ENCODE measurements at regions of chr17 and their contacts with region 1.

Region 1: DNA sequence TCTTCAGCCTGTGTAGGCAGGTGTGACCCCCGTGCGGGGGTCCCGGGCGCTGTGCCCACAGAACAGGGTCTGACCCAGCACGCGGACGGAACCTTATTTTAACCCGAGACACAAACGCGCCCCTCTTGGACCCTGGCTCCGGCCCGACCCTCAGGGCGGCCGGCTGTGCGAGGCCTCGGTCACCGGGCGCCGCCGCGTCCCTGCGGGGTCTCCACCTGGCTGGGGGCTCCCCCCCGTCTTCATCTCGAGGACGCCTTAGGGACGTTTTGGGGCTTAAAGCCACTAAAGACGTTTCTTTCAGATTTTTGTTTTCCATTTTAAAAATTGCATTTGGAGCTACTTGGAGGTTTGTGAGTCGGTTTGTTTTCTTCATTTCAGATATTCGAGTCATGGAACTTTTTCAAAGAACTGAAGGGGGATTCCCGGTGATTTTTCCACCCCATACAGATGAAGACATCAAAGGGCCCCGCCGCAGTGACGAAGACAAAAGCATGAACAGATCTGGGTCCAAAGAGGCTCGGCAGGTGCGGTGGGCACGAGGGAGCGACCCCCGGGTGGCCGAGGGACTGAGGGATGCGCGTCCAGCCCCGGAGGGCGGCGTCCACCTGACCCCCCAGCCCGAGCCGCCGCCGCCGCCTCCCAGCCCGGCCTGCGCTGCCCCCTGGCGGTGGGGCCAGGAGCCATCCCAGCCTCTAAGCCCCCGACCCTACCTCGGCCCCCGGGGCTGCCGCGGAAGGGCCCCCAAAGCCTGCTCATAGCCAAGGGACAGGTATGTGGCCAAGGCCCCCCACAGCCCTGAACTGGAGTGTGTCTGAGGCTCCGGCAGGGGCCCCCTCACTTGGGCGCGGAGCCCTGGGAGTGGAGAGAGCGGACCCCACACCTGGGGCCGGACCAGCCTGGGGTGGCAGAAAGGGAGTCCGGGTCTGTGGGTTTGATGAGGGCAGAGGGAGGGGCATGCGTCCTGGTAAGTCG is 3.8 kb upstream of the CD7 start:
- DNase-seq: peak; percentile 40
- H3K4me3 ChIP-seq: peak overlapping the region in 1 of 4 donors; percentile 11
- H3K27ac ChIP-seq: no peak overlapping the region
- H3K4me1 ChIP-seq: peaks cover 0 to 28% (median 11%) of the 10 kb centered on the region in 4 donors
- H3K27me3 ChIP-seq: peaks cover 6% of the 10 kb centered on the region
- CTCF ChIP-seq: peak; percentile 89 to 98 (median 94)
- EP300 ChIP-seq: no peak
- POLR2A ChIP-seq: no peak

Region 2: DNA sequence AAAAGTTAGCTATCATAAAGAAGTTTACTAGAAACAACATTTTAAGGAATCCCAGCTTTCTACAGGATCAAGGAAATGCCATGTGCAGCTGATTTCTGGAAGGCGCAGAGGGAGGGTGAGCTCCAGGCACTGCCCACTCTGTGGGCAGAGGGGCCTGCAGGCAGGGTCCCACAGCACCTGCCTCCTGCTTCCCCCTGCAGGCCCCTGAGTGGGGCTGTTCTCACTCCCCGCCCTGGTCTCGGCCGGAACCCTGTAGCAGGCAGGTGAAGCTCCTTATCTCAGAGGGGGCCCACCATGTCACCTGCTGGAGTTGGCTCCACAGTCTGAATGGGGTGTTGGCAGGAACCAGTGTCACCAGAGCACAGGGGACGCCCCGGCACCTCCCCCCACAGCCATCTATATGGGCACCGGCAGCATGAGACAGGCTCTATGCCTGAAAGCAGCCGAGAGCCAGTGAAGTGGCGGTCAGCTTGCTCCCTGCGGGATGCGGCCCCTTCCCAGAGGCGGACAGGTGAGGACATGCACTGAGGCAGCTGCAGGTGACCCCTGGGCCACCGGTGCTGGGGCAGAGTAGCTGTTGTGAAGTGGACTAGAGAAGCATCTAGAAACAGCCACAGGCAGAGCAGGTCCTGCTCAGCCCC is 175.6 kb before region 1 on chr17:
- in situ Hi-C with region 1: no loop called
- intact Hi-C with region 1: no loop called
- DNase-seq: no peak
- H3K4me3 ChIP-seq: no peak overlapping the region
- H3K27ac ChIP-seq: no peak overlapping the region
- H3K4me1 ChIP-seq: no peaks in the 10 kb centered on the region
- H3K27me3 ChIP-seq: no peaks in the 10 kb centered on the region
- CTCF ChIP-seq: no peak
- EP300 ChIP-seq: no peak
- POLR2A ChIP-seq: no peak

Region 3: DNA sequence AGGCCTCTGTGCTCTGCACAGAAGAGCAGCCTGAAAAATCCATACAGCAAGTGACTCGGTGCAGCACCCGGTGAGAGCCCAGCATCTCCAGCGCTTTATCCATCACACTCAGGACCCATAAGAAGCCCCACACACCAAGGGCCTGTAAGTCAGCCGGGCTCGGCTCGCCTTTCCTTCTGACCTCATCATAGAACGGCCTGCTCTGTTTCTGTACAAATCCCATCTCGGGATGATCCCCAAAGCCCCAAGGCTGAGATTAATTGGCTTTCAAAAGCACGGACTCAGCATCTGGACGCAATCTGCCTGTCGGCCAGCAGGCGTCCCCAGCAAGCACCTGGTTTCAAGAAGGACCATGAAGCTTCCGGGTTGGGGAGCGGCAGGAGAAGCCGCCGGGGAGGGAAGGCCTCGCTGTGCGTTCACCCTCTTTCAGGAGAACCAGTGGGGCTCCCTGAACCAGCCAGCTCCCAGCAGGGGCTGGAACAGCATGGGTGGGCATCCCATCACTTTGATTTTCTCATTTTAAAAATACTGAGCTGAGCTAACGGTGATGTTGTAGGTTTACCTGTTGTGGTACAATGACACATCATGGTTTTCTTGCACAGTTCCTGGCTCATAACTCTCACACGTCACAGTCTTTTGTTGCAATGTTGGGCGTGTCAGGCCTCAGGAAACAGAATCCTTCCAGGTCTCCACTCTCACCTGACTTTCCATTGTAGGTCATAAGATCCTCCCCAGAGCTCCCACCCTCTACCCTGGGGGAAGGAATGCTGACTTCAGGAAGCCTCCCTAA is 115.3 kb before region 1 on chr17:
- in situ Hi-C with region 1: loop called in 1 of 4 experiments (anchors 10 kb)
- intact Hi-C with region 1: loop called (anchors 2 kb)
- DNase-seq: peak; percentile 89
- H3K4me3 ChIP-seq: no peak overlapping the region
- H3K27ac ChIP-seq: peak overlapping the region; percentile 73 to 81 (median 76)
- H3K4me1 ChIP-seq: peaks cover 11 to 15% (median 12%) of the 10 kb centered on the region in 4 donors
- H3K27me3 ChIP-seq: no peaks in the 10 kb centered on the region
- CTCF ChIP-seq: peak; percentile 89 to 97 (median 93)
- EP300 ChIP-seq: no peak
- POLR2A ChIP-seq: peak; percentile 87

Region 4: GRCh38 chr17:82236142-82236981 is 84.9 kb before region 1 on chr17:
- in situ Hi-C with region 1: no loop called
- intact Hi-C with region 1: loop called (anchors 5 kb)
- DNase-seq: peak; percentile 80
- H3K4me3 ChIP-seq: no peak overlapping the region
- H3K27ac ChIP-seq: peak overlapping the region; percentile 21 to 85 (median 59)
- H3K4me1 ChIP-seq: peaks cover 45 to 86% (median 62%) of the 10 kb centered on the region in 4 donors
- H3K27me3 ChIP-seq: no peaks in the 10 kb centered on the region
- CTCF ChIP-seq: peak; percentile 94 to 97 (median 96)
- EP300 ChIP-seq: no peak
- POLR2A ChIP-seq: no peak

Measured in transverse colon (tissue), 4 donors.